Psoas muscle (tissue), 8 donors: ENCODE measurements at regions of chr15 and their contacts with region 1.

Region 1: GRCh38 chr15:67501177-67501835 is 19.6 kb upstream of the C15orf61 start:
- DNase-seq: no peak
- ATAC-seq: peak in 1 of 4 donors; percentile 67
- H3K4me3 ChIP-seq: no peak overlapping the region
- H3K27ac ChIP-seq: no peak overlapping the region
- H3K4me1 ChIP-seq: no peaks in the 10 kb centered on the region
- H3K27me3 ChIP-seq: no peaks in the 10 kb centered on the region
- CTCF ChIP-seq: peak; percentile 35

Region 2: GRCh38 chr15:67120839-67121643 is 380.3 kb before region 1 on chr15:
- intact Hi-C with region 1: no loop called
- DNase-seq: peak; percentile 91 to 95
- ATAC-seq: peak; percentile 39 to 66 (median 54)
- H3K4me3 ChIP-seq: peak overlapping the region; percentile 42
- H3K27ac ChIP-seq: peak overlapping the region; percentile 97
- H3K4me1 ChIP-seq: peaks cover 83% of the 10 kb centered on the region
- H3K27me3 ChIP-seq: no peaks in the 10 kb centered on the region
- CTCF ChIP-seq: no peak

Region 3: GRCh38 chr15:67548862-67549651 is 47.8 kb after region 1 on chr15:
- intact Hi-C with region 1: loop called in 1 of 2 experiments (anchors 2 kb)
- DNase-seq: no peak
- ATAC-seq: peak; percentile 59 to 77 (median 64)
- H3K4me3 ChIP-seq: no peak overlapping the region
- H3K27ac ChIP-seq: peak overlapping the region; percentile 53
- H3K4me1 ChIP-seq: peaks cover 32% of the 10 kb centered on the region
- H3K27me3 ChIP-seq: no peaks in the 10 kb centered on the region
- CTCF ChIP-seq: no peak